BJ (cell line): ENCODE measurements at regions of chr7 and their contacts with region 1.

Region 1: DNA sequence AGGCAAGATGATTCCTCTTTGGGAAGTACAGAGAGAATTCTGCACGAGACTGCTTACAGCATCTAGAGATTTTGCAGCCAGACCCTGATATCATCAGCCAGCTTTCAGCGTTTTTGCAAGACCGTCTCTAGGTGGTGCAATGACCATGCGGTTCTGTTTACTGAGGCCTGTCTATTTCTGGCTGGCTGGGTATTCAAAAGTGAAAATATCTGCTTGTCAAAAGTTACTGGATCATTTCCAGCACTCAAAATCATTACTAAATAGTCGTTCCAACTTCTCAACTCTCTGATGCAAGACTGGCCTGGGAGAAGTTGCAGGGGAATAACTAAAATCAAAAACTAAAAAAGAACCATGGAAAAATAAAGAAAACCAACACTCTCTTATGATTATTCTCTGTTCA is 240.1 kb downstream of the ELMO1 start:
- DNase-seq: no peak
- H3K4me3 ChIP-seq: no peak overlapping the region
- H3K27me3 ChIP-seq: no peaks in the 10 kb centered on the region
- CTCF ChIP-seq: peak; percentile 50

Region 2: GRCh38 chr7:37007268-37007667 is 201.3 kb before region 1 on chr7:
- CTCF ChIA-PET with region 1: no interaction called
- POLR2A ChIA-PET with region 1: no interaction called
- DNase-seq: no peak
- H3K4me3 ChIP-seq: no peak overlapping the region
- H3K27me3 ChIP-seq: no peaks in the 10 kb centered on the region
- CTCF ChIP-seq: no peak

Region 3: DNA sequence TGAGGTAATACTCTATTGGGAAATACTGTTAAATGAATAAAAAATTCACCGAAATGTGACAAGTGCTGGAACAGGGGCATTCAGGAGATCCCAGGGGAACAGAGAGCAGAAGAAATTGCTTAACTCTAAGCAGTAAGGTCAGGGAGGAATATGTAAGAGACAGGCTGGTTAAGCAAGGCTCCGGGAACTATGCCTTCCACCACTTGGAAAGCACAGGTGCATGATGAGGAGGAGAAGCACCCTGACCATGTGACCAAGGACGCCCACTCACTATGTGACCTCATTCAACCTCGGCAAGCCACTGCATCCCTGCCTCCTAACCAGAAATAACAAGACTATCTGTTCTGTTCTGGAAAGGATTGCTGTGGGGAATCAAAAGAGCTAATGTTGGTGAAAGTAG is 21.7 kb after region 1 on chr7:
- CTCF ChIA-PET with region 1: no interaction called
- POLR2A ChIA-PET with region 1: no interaction called
- DNase-seq: no peak
- H3K4me3 ChIP-seq: no peak overlapping the region
- H3K27me3 ChIP-seq: no peaks in the 10 kb centered on the region
- CTCF ChIP-seq: no peak

Region 4: GRCh38 chr7:37833107-37833817 is 624.7 kb after region 1 on chr7:
- CTCF ChIA-PET with region 1: interaction called, 13 read pairs
- POLR2A ChIA-PET with region 1: no interaction called
- DNase-seq: no peak
- H3K4me3 ChIP-seq: peak overlapping the region; percentile 30
- H3K27me3 ChIP-seq: no peaks in the 10 kb centered on the region
- CTCF ChIP-seq: peak; percentile 64